GM13977 (cell line): ENCODE measurements at regions of chr10 and their contacts with region 1.

Region 1: GRCh38 chr10:117174439-117175214 is 22.7 kb upstream of the KCNK18 start:
- DNase-seq: peak; percentile 83
- CTCF ChIP-seq: peak; percentile 85

Region 2: DNA sequence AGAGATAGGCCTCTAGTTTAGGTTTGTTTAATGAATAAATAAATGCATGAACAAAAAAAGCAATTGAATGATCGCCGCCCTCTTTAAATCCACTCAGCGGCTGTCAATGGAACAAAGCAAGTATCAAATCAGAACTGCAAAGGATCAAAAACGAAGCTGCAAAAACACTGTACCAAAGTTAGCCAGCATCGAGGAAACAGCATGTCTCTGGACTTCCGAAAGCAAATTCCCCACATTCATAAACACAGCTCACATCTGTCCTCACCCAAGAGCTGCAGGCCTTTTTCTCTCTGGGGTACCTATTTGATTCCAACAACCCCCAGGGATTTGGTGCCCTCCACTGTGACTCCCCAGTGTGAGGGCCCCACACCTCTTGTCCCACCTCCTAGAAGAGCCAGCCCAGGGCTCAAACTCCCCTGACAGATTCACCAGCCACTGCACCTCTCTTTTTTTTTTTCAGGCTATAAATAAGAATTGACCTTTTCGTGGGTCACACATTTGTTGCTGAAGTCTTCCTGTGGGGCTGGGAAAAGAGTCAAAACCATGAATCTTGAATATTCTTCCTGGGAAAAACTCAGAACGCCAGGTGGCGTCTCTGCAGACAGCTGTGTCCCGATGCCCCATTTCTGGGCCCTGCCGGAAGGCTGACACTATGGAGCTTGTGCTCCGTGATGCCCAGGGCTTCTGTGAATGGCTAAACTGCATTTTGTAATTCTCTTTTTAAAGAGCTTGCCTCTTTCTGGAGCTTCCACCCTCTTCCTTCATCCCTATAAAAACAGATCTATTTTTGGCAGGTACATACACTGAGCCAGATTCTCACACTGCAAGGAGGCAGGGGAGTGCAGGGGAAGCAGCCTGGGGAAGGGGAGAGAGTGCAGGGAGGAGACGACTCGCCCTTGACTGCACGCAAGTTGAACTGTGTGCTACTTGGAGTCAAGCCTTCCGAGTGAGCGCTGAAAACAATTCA is 484.0 kb before region 1 on chr10:
- in situ Hi-C with region 1: loop called (anchors 25 kb)
- DNase-seq: no peak
- CTCF ChIP-seq: peak; percentile 20

Region 3: DNA sequence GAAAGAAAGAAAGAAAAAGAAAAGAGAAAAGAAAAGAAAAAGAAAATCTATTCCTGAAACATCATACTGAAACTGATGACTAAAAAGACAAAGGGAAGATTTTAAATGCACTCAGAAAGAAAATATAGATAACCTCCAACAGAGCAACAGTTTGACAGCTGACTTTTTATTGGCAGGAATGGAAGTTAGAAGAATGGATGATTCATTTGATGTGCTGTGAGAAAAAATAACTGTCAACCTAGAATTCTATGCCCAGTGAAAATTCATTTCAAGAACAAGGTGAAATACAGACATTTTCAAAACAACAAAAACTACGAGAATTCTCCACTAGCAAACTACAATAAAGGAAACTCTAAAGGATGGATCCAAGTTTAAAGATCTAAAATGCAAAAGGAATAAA is 381.8 kb before region 1 on chr10:
- in situ Hi-C with region 1: loop called (anchors 5 kb)
- DNase-seq: no peak
- CTCF ChIP-seq: no peak

Region 4: GRCh38 chr10:117537436-117537903 is 362.8 kb after region 1 on chr10:
- in situ Hi-C with region 1: loop called (anchors 25 kb)
- DNase-seq: peak; percentile 77
- CTCF ChIP-seq: peak; percentile 73